ENCODE measurements at regions of chr1 and their contacts with region 1.

Region 1: DNA sequence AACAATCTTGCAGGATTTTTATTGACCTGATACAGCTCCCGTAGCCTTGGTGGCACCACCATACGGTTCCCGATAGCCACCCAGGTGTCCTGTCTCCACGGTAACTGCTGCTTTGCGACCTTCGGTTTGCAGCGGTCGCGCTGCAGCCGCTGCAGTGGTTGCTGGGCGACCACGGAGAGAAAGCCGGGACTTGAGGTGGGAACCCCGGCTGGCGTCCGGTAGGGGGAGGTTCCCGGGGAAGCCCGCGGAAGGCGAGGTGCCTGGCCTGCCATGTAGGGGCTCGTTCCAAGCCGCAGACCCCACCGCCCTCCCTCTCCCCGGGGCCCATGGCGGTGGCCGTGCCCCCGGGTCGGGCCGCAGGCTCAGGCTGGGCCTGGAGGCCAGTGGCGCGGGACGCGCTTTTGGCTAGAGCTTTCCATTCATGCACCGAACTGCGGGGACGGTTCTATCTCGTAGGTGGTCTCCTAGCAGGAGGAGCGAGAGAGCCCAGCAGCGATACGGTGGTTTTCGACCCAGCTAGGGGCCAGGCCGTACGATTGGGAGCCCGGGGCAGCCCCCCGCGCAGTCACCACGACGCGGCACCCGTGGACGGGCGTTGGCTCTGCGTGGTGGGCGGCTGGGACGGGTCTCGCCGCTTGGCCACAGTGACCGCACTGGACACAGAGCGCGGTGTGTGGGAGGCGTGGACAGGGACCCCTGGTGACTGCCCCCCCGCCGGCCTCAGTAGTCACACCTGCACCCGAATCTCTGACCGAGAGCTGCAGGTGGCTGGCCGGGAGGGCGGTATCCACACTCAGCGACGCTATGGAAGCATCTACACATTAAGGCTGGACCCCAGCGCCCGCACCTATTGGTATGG is at the start of gene KLHDC9:
- DNase-seq: no peak
- H3K4me3 ChIP-seq: peak within 1 kb of the TSS; percentile 66
- H3K27me3 ChIP-seq: no peaks in the 10 kb centered on the region
- CTCF ChIP-seq: peak; percentile 39; the same call in 1 of the 2 replicates
- polyA plus RNA-seq, gene KLHDC9: 3.9 and 5.8 TPM in 2 replicates

Region 2: DNA sequence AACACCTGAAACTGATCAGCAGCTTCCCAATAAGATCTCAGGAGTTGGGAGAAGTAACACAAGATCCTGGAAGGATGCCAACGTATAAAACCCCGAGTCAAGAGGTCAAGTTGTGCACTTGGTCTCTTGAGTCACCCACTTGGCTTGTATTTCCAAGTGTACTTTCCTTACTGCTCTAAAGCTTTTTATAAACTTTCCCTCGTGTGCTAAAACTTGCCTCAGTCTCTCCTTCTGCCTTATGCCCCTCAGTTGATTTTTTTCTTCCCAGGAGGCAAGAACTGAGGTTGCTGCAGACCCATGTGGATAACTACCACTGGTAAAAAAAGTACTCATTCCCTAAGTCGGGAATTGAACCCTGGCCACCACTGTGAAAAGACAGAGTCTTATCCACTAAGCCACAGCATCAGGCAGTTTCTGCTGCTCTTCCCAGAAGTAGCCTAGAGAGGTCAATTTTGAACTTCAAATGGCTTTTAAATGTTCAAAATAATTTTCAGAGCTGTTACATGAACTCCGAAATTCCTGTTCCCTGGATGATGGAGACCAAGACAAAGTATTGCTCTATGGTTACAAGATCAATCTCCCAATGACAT is 172.7 kb before region 1 on chr1:
- CTCF ChIA-PET with region 1: no interaction called
- POLR2A ChIA-PET with region 1: no interaction called
- DNase-seq: no peak
- H3K4me3 ChIP-seq: no peak overlapping the region
- H3K27me3 ChIP-seq: no peaks in the 10 kb centered on the region
- CTCF ChIP-seq: no peak

Region 3: GRCh38 chr1:161038523-161039153 is 59.8 kb before region 1 on chr1 and contains the start of gene TSTD1:
- CTCF ChIA-PET with region 1: interaction called, 48 read pairs
- POLR2A ChIA-PET with region 1: no interaction called
- DNase-seq: no peak
- H3K4me3 ChIP-seq: no peak within 1 kb of the TSS
- H3K27me3 ChIP-seq: no peaks in the 10 kb centered on the region
- CTCF ChIP-seq: no peak
- polyA plus RNA-seq, gene TSTD1: 0.22 and 0.26 TPM in 2 replicates

Region 4: DNA sequence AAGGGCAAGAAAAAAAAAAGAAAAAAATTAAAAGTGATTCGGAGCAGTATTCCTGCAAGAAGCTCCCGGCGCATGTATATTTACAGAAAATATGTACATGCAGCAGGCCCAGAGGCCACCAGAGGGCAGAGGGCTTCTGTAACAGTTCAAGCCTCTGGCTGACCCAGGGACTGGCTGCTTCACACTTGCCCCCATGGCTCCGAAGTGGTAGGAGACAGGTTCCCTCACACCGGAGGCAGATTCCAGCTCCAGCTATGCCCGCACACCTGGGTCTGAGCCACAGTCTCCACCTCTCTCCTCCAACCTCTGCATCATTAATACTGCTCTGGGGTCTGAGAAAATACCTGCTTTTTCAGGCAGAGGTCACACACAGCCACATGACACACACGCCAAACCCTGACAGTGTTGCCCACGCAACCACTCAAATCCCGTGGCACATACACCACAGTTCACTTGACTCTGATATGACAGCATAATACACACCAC is 26.5 kb before region 1 on chr1:
- CTCF ChIA-PET with region 1: interaction called, 132 read pairs
- POLR2A ChIA-PET with region 1: no interaction called
- DNase-seq: no peak
- H3K4me3 ChIP-seq: no peak overlapping the region
- H3K27me3 ChIP-seq: no peaks in the 10 kb centered on the region
- CTCF ChIP-seq: peak; percentile 62

Region 5: DNA sequence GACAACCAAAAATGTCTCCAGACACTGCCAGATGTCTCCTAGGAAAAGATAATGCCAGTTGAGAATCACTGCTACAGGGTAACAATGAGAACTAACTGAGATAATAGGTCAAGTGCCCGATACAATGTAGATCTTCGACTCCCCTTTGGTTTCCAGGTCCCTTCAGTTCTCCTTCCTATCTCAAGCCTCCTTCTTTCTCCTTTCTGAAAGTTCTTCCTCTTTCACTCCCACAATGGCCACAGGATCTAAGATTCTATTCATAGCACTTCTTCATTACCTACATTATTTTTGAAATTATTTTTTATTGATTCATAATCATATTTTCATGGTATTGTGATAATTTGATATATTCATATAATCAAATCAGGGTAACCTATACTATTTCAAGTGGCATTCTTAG is 13.1 kb after region 1 on chr1:
- CTCF ChIA-PET with region 1: interaction called, 12 read pairs
- POLR2A ChIA-PET with region 1: no interaction called
- DNase-seq: no peak
- H3K4me3 ChIP-seq: no peak overlapping the region
- H3K27me3 ChIP-seq: no peaks in the 10 kb centered on the region
- CTCF ChIP-seq: no peak

Measured in BJ (cell line).